GM12878 (cell line): ENCODE measurements at regions of chr5 and their contacts with region 1.

Region 1: DNA sequence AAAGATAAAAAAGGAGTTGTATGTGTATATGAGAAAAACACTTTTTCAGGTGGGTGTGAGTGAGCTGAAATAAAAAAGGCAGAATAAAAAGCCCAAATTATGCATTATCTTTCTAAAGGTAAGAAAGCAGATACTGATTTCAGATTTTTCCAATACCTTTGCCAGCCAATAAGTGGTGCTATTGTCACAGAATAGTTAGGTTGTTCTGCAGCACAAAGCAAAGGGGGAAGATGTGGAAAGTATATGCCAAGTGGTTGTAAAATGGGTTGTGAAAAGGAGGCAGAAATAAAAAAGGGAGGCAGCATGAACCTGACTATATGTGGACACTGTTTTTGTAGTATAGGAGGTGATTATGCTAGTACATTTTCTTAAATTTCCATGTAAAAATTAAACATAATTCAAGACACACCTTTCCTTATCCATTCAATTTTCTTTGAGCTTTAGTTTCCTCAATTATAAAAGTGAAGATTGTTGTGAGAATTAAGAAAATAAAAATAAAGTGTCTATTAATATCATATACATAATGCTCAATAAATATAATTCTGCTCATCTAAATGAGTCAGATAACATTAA is 106.7 kb downstream of the SMIM15 start:
- DNase-seq: peak; percentile 15
- ATAC-seq: peak; percentile 80
- H3K4me3 ChIP-seq: no peak overlapping the region
- H3K27ac ChIP-seq: no peak overlapping the region
- H3K4me1 ChIP-seq: peaks cover 3% of the 10 kb centered on the region; the same call in 1 of the 2 replicates
- H3K27me3 ChIP-seq: no peaks in the 10 kb centered on the region
- CTCF ChIP-seq: peak; percentile 57 to 80 (median 63); a peak in 5 of 6 replicates
- EP300 ChIP-seq: no peak
- POLR2A ChIP-seq: no peak
- RAD21 ChIP-seq: peak; percentile 96

Region 2: GRCh38 chr5:60677844-60678664 is 377.5 kb before region 1 on chr5:
- CTCF ChIA-PET with region 1: interaction called, 4 read pairs
- POLR2A ChIA-PET with region 1: no interaction called
- RAD21 ChIA-PET with region 1: no interaction called
- SMC1A ChIA-PET with region 1: interaction called, 3 read pairs
- in situ Hi-C with region 1: no loop called
- intact Hi-C with region 1: loop called (anchors 10 kb)
- DNase-seq: peak; percentile 20
- ATAC-seq: peak; percentile 88
- H3K4me3 ChIP-seq: no peak overlapping the region
- H3K27ac ChIP-seq: no peak overlapping the region
- H3K4me1 ChIP-seq: no peaks in the 10 kb centered on the region
- H3K27me3 ChIP-seq: no peaks in the 10 kb centered on the region
- CTCF ChIP-seq: peak; percentile 35 to 61 (median 59); a peak in 5 of 6 replicates
- EP300 ChIP-seq: no peak
- POLR2A ChIP-seq: no peak
- RAD21 ChIP-seq: peak; percentile 72

Region 3: GRCh38 chr5:60929024-60929423 is 126.5 kb before region 1 on chr5:
- CTCF ChIA-PET with region 1: no interaction called
- POLR2A ChIA-PET with region 1: no interaction called
- RAD21 ChIA-PET with region 1: no interaction called
- SMC1A ChIA-PET with region 1: no interaction called
- in situ Hi-C with region 1: no loop called
- intact Hi-C with region 1: no loop called
- DNase-seq: no peak
- ATAC-seq: no peak
- H3K4me3 ChIP-seq: no peak overlapping the region
- H3K27ac ChIP-seq: no peak overlapping the region
- H3K4me1 ChIP-seq: no peaks in the 10 kb centered on the region
- H3K27me3 ChIP-seq: no peaks in the 10 kb centered on the region
- CTCF ChIP-seq: peak in 1 of 3 experiments; percentile 29; a peak in 1 of 6 replicates
- EP300 ChIP-seq: no peak
- POLR2A ChIP-seq: no peak
- RAD21 ChIP-seq: no peak

Region 4: DNA sequence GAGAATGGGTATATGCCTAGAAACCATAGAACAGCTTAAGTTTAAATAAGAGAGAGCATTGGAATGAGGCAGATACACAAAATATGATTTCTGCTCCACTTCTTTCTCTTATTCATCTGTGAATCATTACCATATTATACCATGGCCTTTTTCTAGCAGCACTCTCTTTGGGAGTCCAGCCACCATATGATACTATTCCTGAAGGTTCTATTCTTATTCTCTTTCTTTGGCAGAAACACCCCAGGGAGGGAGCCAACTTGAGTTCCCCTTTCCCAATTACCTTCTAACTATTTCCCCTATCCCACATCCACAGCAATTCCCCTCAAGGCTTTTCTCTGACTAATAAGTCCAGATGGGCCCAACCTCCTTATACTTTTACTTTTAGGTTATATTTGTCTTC is 54.6 kb before region 1 on chr5:
- CTCF ChIA-PET with region 1: no interaction called
- POLR2A ChIA-PET with region 1: no interaction called
- RAD21 ChIA-PET with region 1: no interaction called
- SMC1A ChIA-PET with region 1: no interaction called
- in situ Hi-C with region 1: no loop called
- intact Hi-C with region 1: no loop called
- DNase-seq: no peak
- ATAC-seq: no peak
- H3K4me3 ChIP-seq: no peak overlapping the region
- H3K27ac ChIP-seq: no peak overlapping the region
- H3K4me1 ChIP-seq: no peaks in the 10 kb centered on the region
- H3K27me3 ChIP-seq: no peaks in the 10 kb centered on the region
- CTCF ChIP-seq: no peak
- EP300 ChIP-seq: no peak
- POLR2A ChIP-seq: no peak
- RAD21 ChIP-seq: no peak

Region 5: DNA sequence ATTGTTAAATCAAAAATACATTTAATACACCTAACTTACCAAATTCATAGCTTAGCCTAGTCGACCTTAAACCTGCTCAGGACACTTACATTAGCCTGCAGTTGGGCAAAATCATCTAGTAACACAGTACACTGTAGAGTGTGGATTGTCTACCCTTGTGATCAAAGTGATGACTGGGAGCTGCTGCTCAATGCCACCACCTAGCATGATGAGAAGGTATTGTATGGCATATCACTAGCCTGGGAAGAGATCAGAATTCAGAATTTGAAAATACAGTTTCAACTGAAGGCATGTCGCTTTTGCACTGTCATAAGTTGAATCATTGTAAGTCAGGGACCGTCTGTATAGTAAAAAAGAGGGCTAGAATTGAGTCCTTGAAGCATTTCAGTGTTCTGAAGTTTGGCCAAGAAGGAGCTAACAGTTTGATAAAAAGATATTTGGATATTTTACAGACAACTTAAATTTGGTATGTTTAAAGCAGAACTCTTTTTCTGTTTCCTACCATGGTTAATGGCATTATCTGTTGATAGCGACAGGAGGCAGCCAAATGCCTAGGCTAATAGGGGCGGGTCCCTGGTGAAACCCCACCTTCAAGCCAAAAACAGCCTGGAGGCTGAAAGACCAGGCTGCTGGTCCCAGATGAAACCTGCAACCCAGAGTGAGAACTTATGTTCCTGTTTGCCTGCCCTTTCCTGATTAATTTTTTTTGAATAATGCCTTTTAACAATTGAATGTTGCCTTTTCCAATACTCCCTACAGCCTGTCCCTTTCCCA is 83.8 kb after region 1 on chr5:
- CTCF ChIA-PET with region 1: interaction called, 5 read pairs
- POLR2A ChIA-PET with region 1: interaction called, 3 read pairs
- RAD21 ChIA-PET with region 1: no interaction called
- SMC1A ChIA-PET with region 1: interaction called, 11 read pairs
- in situ Hi-C with region 1: no loop called
- intact Hi-C with region 1: no loop called
- DNase-seq: no peak
- ATAC-seq: peak; percentile 83
- H3K4me3 ChIP-seq: no peak overlapping the region
- H3K27ac ChIP-seq: no peak overlapping the region
- H3K4me1 ChIP-seq: no peaks in the 10 kb centered on the region
- H3K27me3 ChIP-seq: no peaks in the 10 kb centered on the region
- CTCF ChIP-seq: peak; percentile 17 to 32 (median 26); a peak in 4 of 6 replicates
- EP300 ChIP-seq: no peak
- POLR2A ChIP-seq: no peak
- RAD21 ChIP-seq: peak; percentile 44

Region 6: GRCh38 chr5:61357745-61358144 is 302.2 kb after region 1 on chr5:
- CTCF ChIA-PET with region 1: interaction called, 14 read pairs
- POLR2A ChIA-PET with region 1: no interaction called
- RAD21 ChIA-PET with region 1: interaction called, 3 read pairs
- SMC1A ChIA-PET with region 1: no interaction called
- in situ Hi-C with region 1: no loop called
- intact Hi-C with region 1: no loop called
- DNase-seq: no peak
- ATAC-seq: no peak
- H3K4me3 ChIP-seq: no peak overlapping the region
- H3K27ac ChIP-seq: no peak overlapping the region
- H3K4me1 ChIP-seq: no peaks in the 10 kb centered on the region
- H3K27me3 ChIP-seq: no peaks in the 10 kb centered on the region
- CTCF ChIP-seq: peak; percentile 27 to 40 (median 27); a peak in 5 of 6 replicates
- EP300 ChIP-seq: no peak
- POLR2A ChIP-seq: no peak
- RAD21 ChIP-seq: peak; percentile 50

Region 7: DNA sequence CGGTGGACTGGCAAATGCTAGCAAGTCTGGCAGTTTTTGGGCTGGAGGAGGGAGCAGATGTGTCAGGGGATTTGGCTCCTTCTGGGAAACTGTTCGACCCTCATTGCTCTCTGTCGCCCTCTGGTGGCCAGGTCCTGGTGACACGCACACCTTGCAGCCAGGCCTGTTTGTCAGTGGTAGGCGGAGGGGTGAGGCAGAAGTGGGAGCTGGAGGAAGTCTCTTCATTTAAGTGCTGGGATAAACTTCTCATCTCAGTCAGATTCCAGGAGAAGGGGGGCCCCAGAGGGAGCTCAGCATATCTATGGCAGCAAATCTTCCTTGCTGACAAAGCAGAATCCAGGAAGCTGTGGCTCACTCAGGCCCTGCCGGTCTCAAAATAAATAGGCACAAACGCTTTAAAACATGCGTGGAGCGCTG is 603.1 kb after region 1 on chr5:
- CTCF ChIA-PET with region 1: interaction called, 95 read pairs
- POLR2A ChIA-PET with region 1: no interaction called
- RAD21 ChIA-PET with region 1: interaction called, 11 read pairs
- SMC1A ChIA-PET with region 1: interaction called, 27 read pairs
- in situ Hi-C with region 1: loop called (anchors 5 kb)
- intact Hi-C with region 1: loop called (anchors 1 kb)
- DNase-seq: peak; percentile 21
- ATAC-seq: peak; percentile 97
- H3K4me3 ChIP-seq: no peak overlapping the region
- H3K27ac ChIP-seq: no peak overlapping the region
- H3K4me1 ChIP-seq: no peaks in the 10 kb centered on the region
- H3K27me3 ChIP-seq: no peaks in the 10 kb centered on the region; a peak in 3 of 4 replicates
- CTCF ChIP-seq: peak; percentile 88 to 95 (median 93)
- EP300 ChIP-seq: no peak
- POLR2A ChIP-seq: no peak
- RAD21 ChIP-seq: peak; percentile 89

Region 8: DNA sequence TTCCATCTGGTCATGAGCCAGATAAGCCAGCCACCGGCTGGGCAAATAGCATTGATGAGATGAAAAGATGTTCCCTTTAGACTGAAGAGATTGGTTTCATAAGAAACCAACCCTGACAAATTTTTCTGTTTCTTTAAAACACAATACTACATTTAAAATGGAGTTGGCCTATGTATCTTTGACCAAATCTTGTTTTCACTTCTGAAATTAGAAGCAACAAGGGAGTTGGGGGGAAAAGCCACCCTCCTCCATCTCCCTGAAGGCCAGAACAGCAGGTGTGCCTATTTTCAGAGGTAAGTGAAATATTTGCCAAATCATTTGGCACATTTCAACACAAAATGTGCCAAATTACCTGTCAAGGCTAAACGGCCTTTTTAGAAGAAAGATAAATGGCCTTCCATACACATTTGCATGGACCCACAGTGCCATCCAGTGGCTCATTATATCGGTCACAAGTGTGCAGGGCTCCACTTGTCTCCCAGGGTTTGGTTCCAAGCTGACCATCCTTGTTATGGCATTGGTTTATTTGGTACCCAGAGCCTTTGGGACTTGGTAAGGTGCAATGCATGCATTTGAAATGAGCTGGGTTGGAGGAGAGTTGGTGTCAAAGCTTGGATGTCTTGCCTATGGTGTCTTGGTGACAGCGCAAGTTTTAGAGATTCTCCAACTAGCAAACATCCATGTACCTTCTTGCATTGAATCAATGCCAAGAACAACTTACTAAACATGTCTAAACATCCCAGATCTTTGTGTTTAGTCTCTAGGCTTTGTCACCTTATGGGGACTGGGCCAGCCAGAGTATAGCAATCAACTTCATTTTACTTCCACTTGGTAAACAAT is 878.5 kb after region 1 on chr5:
- CTCF ChIA-PET with region 1: interaction called, 6 read pairs
- POLR2A ChIA-PET with region 1: no interaction called
- RAD21 ChIA-PET with region 1: interaction called, 3 read pairs
- SMC1A ChIA-PET with region 1: interaction called, 4 read pairs
- in situ Hi-C with region 1: no loop called
- intact Hi-C with region 1: loop called (anchors 5 kb)
- DNase-seq: peak; percentile 7
- ATAC-seq: peak; percentile 83
- H3K4me3 ChIP-seq: no peak overlapping the region
- H3K27ac ChIP-seq: no peak overlapping the region
- H3K4me1 ChIP-seq: no peaks in the 10 kb centered on the region
- H3K27me3 ChIP-seq: no peaks in the 10 kb centered on the region
- CTCF ChIP-seq: peak; percentile 43 to 54 (median 52); a peak in 4 of 6 replicates
- EP300 ChIP-seq: no peak
- POLR2A ChIP-seq: no peak
- RAD21 ChIP-seq: peak; percentile 70